Naive thymus-derived CD4-positive, alpha-beta T cell (primary cell): ENCODE measurements at regions of chr7 and their contacts with region 1.

Region 1: DNA sequence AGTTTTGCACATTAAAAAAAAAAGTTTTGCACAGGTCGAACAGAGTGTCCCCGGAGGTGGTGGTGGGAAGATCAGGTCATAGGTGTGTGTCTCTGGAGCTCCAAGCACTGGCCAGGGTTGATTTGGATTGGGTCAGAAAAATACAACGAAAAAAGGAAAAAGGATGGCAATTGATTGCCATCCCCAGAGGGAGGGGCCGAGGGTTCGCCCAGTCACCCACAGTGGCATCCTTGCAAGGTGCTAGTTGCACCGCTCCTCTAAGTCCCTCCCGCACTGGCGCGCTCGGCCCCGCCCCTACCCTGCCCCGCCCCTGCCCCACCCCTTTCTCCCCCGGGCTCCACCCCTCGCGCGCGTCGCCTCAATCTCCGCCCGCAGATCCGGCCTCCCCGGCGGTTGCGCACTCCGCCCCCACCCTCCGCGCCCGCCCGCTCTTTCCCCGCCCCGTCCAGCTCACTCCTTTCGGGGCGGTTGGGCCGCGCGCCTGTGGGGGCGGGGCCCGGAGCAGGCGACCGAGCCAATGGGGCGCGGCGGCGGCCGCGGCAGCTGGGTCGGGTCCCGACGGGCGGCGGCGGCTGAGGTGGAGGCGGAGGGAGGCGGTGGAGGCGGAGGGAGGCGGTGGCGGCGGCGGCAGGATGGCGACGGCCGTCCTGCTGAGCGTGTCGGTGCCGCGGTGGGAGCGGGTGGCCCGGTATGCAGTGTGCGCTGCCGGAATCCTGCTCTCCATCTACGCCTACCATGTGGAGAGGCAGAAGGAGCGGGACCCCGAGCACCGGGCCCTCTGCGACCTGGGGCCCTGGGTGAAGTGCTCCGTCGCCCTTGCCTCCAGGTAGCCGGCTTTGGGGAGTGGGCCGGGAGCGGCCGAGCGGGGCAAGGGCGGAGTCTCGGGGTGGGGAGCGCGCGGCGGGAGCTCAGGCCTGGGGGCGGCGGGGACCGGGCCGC is 31.5 kb upstream of the ERV3-1 start:
- DNase-seq: peak; percentile 85 to 92 (median 88)
- ATAC-seq: peak; percentile 95
- H3K4me3 ChIP-seq: no peak overlapping the region
- H3K4me3 Mint-ChIP-seq: peak overlapping the region; percentile 77 to 87 (median 82)
- H3K27ac ChIP-seq: peak overlapping the region; percentile 80
- H3K27ac Mint-ChIP-seq: peak overlapping the region; percentile 10 to 91 (median 83)
- H3K4me1 ChIP-seq: peaks cover 0 to 8% of the 10 kb centered on the region in 2 donors
- H3K4me1 Mint-ChIP-seq: peaks cover 7 to 18% (median 15%) of the 10 kb centered on the region in 7 donors
- H3K27me3 ChIP-seq: no peaks in the 10 kb centered on the region
- H3K27me3 Mint-ChIP-seq: no peaks in the 10 kb centered on the region

Region 2: DNA sequence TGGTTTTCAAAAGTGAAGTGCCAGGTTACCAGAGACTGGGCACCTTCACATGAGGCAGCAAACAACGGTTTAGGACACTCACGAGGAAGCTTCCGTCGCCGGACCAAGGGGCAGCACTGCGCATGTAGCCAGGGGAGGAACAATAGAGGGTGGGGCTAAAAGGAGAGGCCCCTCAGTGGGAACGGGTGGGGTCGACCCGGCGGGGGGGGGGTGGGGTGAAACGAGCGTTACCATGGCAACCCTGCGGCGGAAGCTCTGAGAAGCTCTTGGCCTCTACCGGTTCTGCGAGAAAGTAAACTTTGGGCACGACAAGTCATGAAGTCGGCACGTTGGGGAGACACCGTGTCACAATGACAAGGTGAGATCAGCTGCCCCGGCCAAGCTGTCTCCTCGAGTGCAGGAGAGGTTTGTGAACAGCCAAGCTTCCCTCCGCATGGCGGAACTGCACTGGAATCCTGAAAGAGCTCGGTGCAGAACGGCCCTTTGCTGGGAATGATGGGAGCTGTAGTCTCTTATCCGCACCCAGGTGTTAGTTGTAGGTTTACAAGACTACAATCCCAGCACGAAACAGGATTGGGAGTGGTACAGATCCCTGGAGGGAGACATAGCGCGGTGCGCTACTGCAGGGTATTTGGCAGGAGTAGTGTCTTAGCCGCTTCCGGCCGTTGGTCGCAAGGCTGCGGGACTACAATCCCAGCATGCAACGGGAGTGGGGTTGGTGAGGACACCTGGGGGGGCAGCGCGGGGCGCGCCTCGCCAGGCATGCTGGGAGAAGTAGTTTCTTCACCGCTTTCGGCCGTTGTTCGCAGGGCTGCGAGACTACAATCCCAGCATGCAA is 1112.2 kb before region 1 on chr7:
- CTCF ChIA-PET with region 1: no interaction called
- POLR2A ChIA-PET with region 1: no interaction called
- intact Hi-C with region 1: loop called in 1 of 2 experiments (anchors 2 kb)
- DNase-seq: peak; percentile 69 to 98 (median 95)
- ATAC-seq: peak; percentile 98
- H3K4me3 ChIP-seq: peak overlapping the region; percentile 64
- H3K4me3 Mint-ChIP-seq: peak overlapping the region; percentile 88 to 100 (median 98)
- H3K27ac ChIP-seq: peak overlapping the region; percentile 82
- H3K27ac Mint-ChIP-seq: peak overlapping the region; percentile 87 to 98 (median 95)
- H3K4me1 ChIP-seq: no peaks in the 10 kb centered on the region
- H3K4me1 Mint-ChIP-seq: peaks cover 0 to 24% (median 12%) of the 10 kb centered on the region in 7 donors
- H3K27me3 ChIP-seq: no peaks in the 10 kb centered on the region
- H3K27me3 Mint-ChIP-seq: peaks cover 0 to 4% (median 0%) of the 10 kb centered on the region in 5 donors

Region 3: DNA sequence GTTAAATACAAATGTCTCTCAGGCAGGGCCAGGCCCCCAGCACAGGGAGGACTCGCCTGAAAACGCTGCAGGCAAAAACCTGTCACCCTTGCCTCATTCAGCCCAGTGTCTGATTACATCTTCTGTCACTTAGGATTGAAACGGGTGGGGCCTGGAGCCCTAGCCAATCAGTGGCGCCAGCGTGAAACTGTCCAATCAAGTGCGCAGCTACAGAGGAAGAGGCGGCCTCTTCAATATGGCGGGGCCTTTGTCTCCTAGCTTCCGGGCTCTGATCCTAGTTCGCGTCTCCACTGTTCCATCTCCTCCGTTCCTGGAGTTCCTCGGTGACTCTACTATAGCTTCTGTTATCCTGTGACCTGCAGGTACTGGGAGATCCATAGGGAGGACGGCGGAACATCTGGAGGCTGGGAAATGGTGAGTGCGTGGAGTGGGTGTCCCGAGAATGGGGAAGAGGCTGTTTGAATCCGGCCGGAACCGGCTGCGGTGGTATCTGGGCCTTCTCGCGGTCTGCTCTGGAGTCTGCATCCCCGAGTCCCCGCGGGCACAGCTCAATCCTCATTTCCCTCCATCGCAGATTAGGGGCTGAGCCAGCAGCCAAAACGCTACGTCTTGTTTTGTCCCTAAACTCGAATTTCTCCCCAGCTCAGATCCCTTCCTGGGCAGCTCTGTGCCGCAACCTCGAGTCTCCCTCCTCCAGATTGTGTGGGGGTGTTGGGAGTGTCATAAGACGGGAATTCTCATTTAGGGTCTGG is 724.1 kb before region 1 on chr7 and contains the start of gene ZNF736:
- CTCF ChIA-PET with region 1: no interaction called
- POLR2A ChIA-PET with region 1: no interaction called
- intact Hi-C with region 1: loop called in 1 of 2 experiments (anchors 2 kb)
- DNase-seq: peak; percentile 64 to 92 (median 87)
- ATAC-seq: peak; percentile 100
- H3K4me3 ChIP-seq: peak within 1 kb of the TSS; percentile 81
- H3K4me3 Mint-ChIP-seq: peak within 1 kb of the TSS; percentile 90 to 100 (median 98)
- H3K27ac ChIP-seq: peak within 1 kb of the TSS; percentile 88
- H3K27ac Mint-ChIP-seq: peak within 1 kb of the TSS; percentile 88 to 100 (median 97)
- H3K4me1 ChIP-seq: peaks cover 8 to 12% of the 10 kb centered on the region in 2 donors
- H3K4me1 Mint-ChIP-seq: peaks cover 22 to 54% (median 39%) of the 10 kb centered on the region in 7 donors
- H3K27me3 ChIP-seq: no peaks in the 10 kb centered on the region
- H3K27me3 Mint-ChIP-seq: no peaks in the 10 kb centered on the region
- total RNA-seq, gene ZNF736: 22.8 to 54.2 (median 35.8) TPM

Region 4: GRCh38 chr7:64665980-64666662 is 371.9 kb before region 1 on chr7 and contains the start of gene ZNF107:
- CTCF ChIA-PET with region 1: no interaction called
- POLR2A ChIA-PET with region 1: interaction called, 3 read pairs
- intact Hi-C with region 1: loop called in 1 of 2 experiments (anchors 1 kb)
- DNase-seq: peak; percentile 48 to 90 (median 84)
- ATAC-seq: peak; percentile 98
- H3K4me3 ChIP-seq: peak within 1 kb of the TSS; percentile 92
- H3K4me3 Mint-ChIP-seq: peak within 1 kb of the TSS; percentile 92 to 98 (median 96)
- H3K27ac ChIP-seq: peak within 1 kb of the TSS; percentile 96
- H3K27ac Mint-ChIP-seq: peak within 1 kb of the TSS; percentile 96 to 98 (median 97)
- H3K4me1 ChIP-seq: peaks cover 11 to 19% of the 10 kb centered on the region in 2 donors
- H3K4me1 Mint-ChIP-seq: peaks cover 18 to 79% (median 71%) of the 10 kb centered on the region in 7 donors
- H3K27me3 ChIP-seq: no peaks in the 10 kb centered on the region
- H3K27me3 Mint-ChIP-seq: no peaks in the 10 kb centered on the region
- total RNA-seq, gene ZNF107: 11.2 to 33.5 (median 17.3) TPM

Region 5: DNA sequence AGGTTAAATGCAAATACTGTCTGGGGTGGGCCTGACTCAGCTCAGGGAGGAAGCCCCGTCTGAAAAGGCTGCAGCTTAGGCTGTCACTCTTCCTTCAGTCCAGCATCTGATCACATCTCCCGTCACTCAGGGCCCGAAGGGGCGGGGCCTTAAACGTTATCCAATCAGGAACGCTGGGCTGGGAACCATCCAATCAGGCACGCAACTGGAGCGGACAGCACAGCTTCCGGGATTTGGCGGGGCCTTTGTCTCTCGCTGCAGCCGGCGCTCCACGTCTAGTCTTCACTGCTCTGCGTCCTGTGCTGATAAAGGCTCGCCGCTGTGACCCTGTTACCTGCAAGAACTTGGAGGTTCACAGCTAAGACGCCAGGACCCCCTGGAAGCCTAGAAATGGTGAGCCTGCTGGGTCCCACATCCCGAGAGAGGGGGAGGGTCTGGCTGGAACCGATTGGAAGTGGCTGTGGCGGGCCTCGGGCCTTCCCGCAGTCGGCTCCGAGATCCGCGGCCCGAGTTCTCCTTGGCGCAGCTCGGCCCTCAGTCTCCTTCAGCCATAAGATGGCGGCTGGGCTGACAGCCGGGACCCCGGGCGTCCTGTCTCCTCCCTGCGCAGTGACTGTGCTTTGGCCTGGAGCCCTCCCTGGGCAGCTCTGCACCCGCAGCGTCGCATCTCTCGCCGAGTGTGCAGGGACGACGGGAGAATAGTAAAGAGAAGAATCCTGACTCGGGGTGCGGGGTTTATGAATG is 335.8 kb after region 1 on chr7 and contains the start of gene ZNF92:
- CTCF ChIA-PET with region 1: no interaction called
- POLR2A ChIA-PET with region 1: interaction called, 3 read pairs
- intact Hi-C with region 1: loop called (anchors 1 kb)
- DNase-seq: peak; percentile 84 to 95 (median 94)
- ATAC-seq: peak; percentile 99
- H3K4me3 ChIP-seq: peak within 1 kb of the TSS; percentile 87
- H3K4me3 Mint-ChIP-seq: peak within 1 kb of the TSS; percentile 90 to 98 (median 96)
- H3K27ac ChIP-seq: peak within 1 kb of the TSS; percentile 82
- H3K27ac Mint-ChIP-seq: peak within 1 kb of the TSS; percentile 87 to 96 (median 93)
- H3K4me1 ChIP-seq: peaks cover 8 to 21% of the 10 kb centered on the region in 2 donors
- H3K4me1 Mint-ChIP-seq: peaks cover 18 to 57% (median 49%) of the 10 kb centered on the region in 7 donors
- H3K27me3 ChIP-seq: no peaks in the 10 kb centered on the region
- H3K27me3 Mint-ChIP-seq: no peaks in the 10 kb centered on the region
- total RNA-seq, gene ZNF92: 16.3 to 22.5 (median 19.3) TPM

Region 6: DNA sequence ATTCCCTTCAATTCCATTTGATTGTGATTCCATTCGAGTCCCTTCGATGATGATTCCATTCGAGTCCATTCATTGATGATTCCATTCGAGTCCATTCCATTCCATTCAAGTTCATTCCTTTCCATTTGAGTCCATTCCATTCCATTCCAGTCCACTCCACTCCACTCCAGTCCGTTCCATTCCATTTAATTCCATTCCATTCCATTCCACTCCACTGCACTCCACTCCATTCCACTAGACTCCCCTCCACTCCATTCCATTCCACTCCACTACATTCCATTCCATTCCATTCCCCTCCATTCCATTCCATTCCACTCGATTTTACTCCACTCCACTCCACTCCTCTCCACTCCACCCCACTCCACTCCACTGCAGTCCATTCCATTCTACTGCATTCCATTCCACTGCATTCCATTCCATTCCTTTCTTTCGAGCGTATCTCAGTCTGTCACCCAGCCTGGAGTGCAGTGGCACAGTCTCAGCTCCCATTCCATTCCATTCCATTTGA is 451.3 kb after region 1 on chr7:
- CTCF ChIA-PET with region 1: no interaction called
- POLR2A ChIA-PET with region 1: no interaction called
- intact Hi-C with region 1: no loop called
- DNase-seq: no peak
- ATAC-seq: no peak
- H3K4me3 ChIP-seq: no peak overlapping the region
- H3K4me3 Mint-ChIP-seq: no peak overlapping the region
- H3K27ac ChIP-seq: no peak overlapping the region
- H3K27ac Mint-ChIP-seq: no peak overlapping the region
- H3K4me1 ChIP-seq: no peaks in the 10 kb centered on the region
- H3K4me1 Mint-ChIP-seq: no peaks in the 10 kb centered on the region
- H3K27me3 ChIP-seq: no peaks in the 10 kb centered on the region
- H3K27me3 Mint-ChIP-seq: peaks cover 0 to 9% (median 0%) of the 10 kb centered on the region in 5 donors

Region 7: DNA sequence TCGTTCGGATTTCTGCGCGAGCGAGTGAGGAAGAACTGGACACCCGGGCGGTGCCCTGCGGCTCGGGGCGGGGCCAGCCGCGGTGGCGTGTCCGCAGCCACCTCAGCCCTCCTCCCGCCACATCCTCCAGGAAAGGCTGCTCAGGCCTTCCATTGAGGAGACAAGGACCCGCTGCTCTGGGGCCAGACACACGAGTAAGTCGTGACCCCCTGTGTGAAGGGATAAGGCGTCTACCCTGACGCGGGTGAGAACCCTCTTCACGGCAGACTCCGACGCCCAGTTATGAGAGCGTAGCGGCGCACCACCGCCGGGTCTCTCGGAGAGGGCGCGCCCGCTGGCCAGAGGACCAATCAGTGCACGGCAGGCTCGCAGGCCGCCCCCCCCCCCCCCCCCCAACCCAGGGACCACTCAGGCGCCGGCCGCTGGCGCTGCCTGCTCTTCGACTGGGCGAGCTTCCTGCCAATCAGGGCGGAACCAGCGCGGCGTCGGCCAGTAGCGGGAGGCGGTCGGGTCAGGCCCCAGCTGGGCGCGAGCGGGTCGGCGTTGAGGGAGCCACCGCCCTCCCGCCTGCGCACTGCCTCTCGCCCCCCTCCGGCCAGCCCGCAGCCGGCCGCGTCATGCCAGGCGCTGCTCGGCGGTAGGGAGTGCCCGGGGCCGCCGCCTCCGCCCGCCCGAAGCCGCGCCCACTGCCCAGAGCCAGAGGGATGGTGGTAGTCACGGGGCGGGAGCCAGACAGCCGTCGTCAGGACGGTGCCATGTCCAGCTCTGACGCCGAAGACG is 1590.5 kb after region 1 on chr7 and contains the start of gene KCTD7:
- CTCF ChIA-PET with region 1: no interaction called
- POLR2A ChIA-PET with region 1: no interaction called
- intact Hi-C with region 1: loop called in 1 of 2 experiments (anchors 2 kb)
- DNase-seq: peak; percentile 89 to 95 (median 92)
- ATAC-seq: peak; percentile 93
- H3K4me3 ChIP-seq: peak within 1 kb of the TSS; percentile 98
- H3K4me3 Mint-ChIP-seq: peak within 1 kb of the TSS; percentile 82 to 92 (median 89)
- H3K27ac ChIP-seq: peak within 1 kb of the TSS; percentile 91
- H3K27ac Mint-ChIP-seq: peak within 1 kb of the TSS; percentile 65 to 92 (median 89)
- H3K4me1 ChIP-seq: peaks cover 31 to 34% of the 10 kb centered on the region in 2 donors
- H3K4me1 Mint-ChIP-seq: peaks cover 37 to 51% (median 47%) of the 10 kb centered on the region in 7 donors
- H3K27me3 ChIP-seq: no peaks in the 10 kb centered on the region
- H3K27me3 Mint-ChIP-seq: peaks cover 0 to 4% (median 0%) of the 10 kb centered on the region in 5 donors
- total RNA-seq, gene KCTD7: 22.9 to 43.6 (median 33.8) TPM